ENCODE measurements at regions of chr21 and their contacts with region 1.

Region 1: GRCh38 chr21:44011980-44012527 is at the start of gene TRAPPC10:
- DNase-seq: peak; percentile 60 to 91 (median 73)
- ATAC-seq: peak; percentile 78
- H3K4me3 ChIP-seq: peak within 1 kb of the TSS; percentile 63
- H3K4me3 Mint-ChIP-seq: peak within 1 kb of the TSS; percentile 87 to 97 (median 93)
- H3K27ac ChIP-seq: peak within 1 kb of the TSS; percentile 92
- H3K27ac Mint-ChIP-seq: peak within 1 kb of the TSS; percentile 92 to 96 (median 95)
- H3K4me1 ChIP-seq: peaks cover 24 to 34% of the 10 kb centered on the region in 2 donors
- H3K4me1 Mint-ChIP-seq: peaks cover 38 to 51% (median 50%) of the 10 kb centered on the region in 7 donors
- H3K27me3 ChIP-seq: no peaks in the 10 kb centered on the region
- H3K27me3 Mint-ChIP-seq: no peaks in the 10 kb centered on the region
- total RNA-seq, gene TRAPPC10: 80.6 to 119 (median 93.2) TPM

Region 2: GRCh38 chr21:43916691-43917514 is 95.2 kb before region 1 on chr21:
- CTCF ChIA-PET with region 1: no interaction called
- POLR2A ChIA-PET with region 1: interaction called, 3 read pairs
- intact Hi-C with region 1: loop called in 1 of 2 experiments (anchors 5 kb)
- DNase-seq: peak; percentile 56 to 83 (median 80)
- ATAC-seq: peak; percentile 93
- H3K4me3 ChIP-seq: peak overlapping the region; percentile 71
- H3K4me3 Mint-ChIP-seq: peak overlapping the region; percentile 83 to 95 (median 89)
- H3K27ac ChIP-seq: peak overlapping the region; percentile 84
- H3K27ac Mint-ChIP-seq: peak overlapping the region; percentile 86 to 96 (median 94)
- H3K4me1 ChIP-seq: peaks cover 25 to 33% of the 10 kb centered on the region in 2 donors
- H3K4me1 Mint-ChIP-seq: peaks cover 47 to 74% (median 61%) of the 10 kb centered on the region in 7 donors
- H3K27me3 ChIP-seq: no peaks in the 10 kb centered on the region
- H3K27me3 Mint-ChIP-seq: peaks cover 0 to 4% (median 0%) of the 10 kb centered on the region in 5 donors

Region 3: GRCh38 chr21:44083631-44084291 is 71.7 kb after region 1 on chr21:
- CTCF ChIA-PET with region 1: interaction called, 3 read pairs
- POLR2A ChIA-PET with region 1: interaction called, 46 read pairs
- intact Hi-C with region 1: loop called in 1 of 2 experiments (anchors 2 kb)
- DNase-seq: peak; percentile 37 to 89 (median 85)
- ATAC-seq: peak; percentile 88
- H3K4me3 ChIP-seq: peak overlapping the region; percentile 50
- H3K4me3 Mint-ChIP-seq: peak overlapping the region; percentile 74 to 89 (median 82)
- H3K27ac ChIP-seq: peak overlapping the region; percentile 86
- H3K27ac Mint-ChIP-seq: peak overlapping the region; percentile 92 to 99 (median 97)
- H3K4me1 ChIP-seq: peaks cover 79 to 92% of the 10 kb centered on the region in 2 donors
- H3K4me1 Mint-ChIP-seq: peaks cover 65 to 97% (median 90%) of the 10 kb centered on the region in 7 donors
- H3K27me3 ChIP-seq: no peaks in the 10 kb centered on the region
- H3K27me3 Mint-ChIP-seq: no peaks in the 10 kb centered on the region

Region 4: DNA sequence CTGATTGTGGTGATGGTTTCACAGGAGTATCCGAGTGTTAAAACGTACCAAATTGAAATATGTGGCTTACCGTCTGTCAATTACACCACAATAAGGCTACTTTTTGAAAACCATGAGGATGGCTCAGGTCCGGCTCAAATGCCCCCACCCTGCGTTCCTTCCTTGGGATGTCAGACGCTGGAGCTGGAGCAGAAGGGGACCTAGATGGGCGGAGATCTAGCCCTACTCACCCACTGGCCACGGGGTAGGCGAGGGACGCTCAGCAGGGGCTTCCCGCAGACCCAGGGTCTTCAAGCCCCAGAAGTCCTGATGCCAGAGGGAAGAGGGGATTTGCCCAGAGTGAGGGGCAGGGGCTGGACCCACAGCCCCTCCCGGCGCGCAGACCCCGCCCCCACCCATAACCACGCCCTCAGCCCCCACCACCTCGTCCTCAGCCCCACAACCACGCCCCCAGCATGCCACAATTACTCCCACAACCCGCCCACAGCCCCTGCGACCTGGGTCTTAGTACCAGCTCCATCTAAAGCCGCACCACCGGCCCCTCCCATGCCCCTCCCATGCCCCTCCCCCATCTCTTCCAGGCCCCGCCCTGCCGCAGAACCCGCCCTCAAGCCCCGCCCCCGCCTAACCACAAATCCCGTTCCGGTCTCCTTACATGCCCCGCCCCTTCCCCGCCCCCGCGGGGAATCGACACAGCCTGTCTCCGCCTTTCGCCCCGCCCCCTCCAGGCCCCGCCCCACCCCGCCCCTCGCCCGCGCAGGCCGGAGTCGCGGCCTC is 442.9 kb after region 1 on chr21 and contains the start of gene LRRC3:
- CTCF ChIA-PET with region 1: no interaction called
- POLR2A ChIA-PET with region 1: no interaction called
- intact Hi-C with region 1: loop called in 1 of 2 experiments (anchors 1 kb)
- DNase-seq: peak; percentile 61 to 82 (median 81)
- ATAC-seq: peak; percentile 91
- H3K4me3 ChIP-seq: peak within 1 kb of the TSS; percentile 60
- H3K4me3 Mint-ChIP-seq: peak within 1 kb of the TSS; percentile 68 to 84 (median 77)
- H3K27ac ChIP-seq: peak within 1 kb of the TSS; percentile 55
- H3K27ac Mint-ChIP-seq: peak within 1 kb of the TSS in 4 of 9 donors; percentile 1 to 60 (median 54)
- H3K4me1 ChIP-seq: peaks cover 0 to 6% of the 10 kb centered on the region in 2 donors
- H3K4me1 Mint-ChIP-seq: peaks cover 0 to 10% (median 6%) of the 10 kb centered on the region in 7 donors
- H3K27me3 ChIP-seq: no peaks in the 10 kb centered on the region
- H3K27me3 Mint-ChIP-seq: peaks cover 0 to 33% (median 12%) of the 10 kb centered on the region in 5 donors
- total RNA-seq, gene LRRC3: 0.79 to 3.3 (median 1.0) TPM

Region 5: GRCh38 chr21:44939532-44940115 is 927.6 kb after region 1 on chr21 and contains the start of gene SLX9:
- CTCF ChIA-PET with region 1: no interaction called
- POLR2A ChIA-PET with region 1: no interaction called
- intact Hi-C with region 1: loop called in 1 of 2 experiments (anchors 10 kb)
- DNase-seq: peak; percentile 70 to 88 (median 79)
- ATAC-seq: peak; percentile 94
- H3K4me3 ChIP-seq: peak within 1 kb of the TSS; percentile 83
- H3K4me3 Mint-ChIP-seq: peak within 1 kb of the TSS; percentile 87 to 95 (median 91)
- H3K27ac ChIP-seq: peak within 1 kb of the TSS; percentile 80
- H3K27ac Mint-ChIP-seq: peak within 1 kb of the TSS; percentile 82 to 96 (median 87)
- H3K4me1 ChIP-seq: peaks cover 22 to 34% of the 10 kb centered on the region in 2 donors
- H3K4me1 Mint-ChIP-seq: peaks cover 30 to 55% (median 45%) of the 10 kb centered on the region in 7 donors
- H3K27me3 ChIP-seq: no peaks in the 10 kb centered on the region
- H3K27me3 Mint-ChIP-seq: no peaks in the 10 kb centered on the region
- total RNA-seq, gene SLX9: 17.8 to 46.4 (median 20.6) TPM

Measured in naive thymus-derived CD4-positive, alpha-beta T cell (primary cell).